Activated naive CD4-positive, alpha-beta T cell treated with anti-CD3 and anti-CD28 coated beads for 36 hours (primary cell): ENCODE measurements at regions of chr4 and their contacts with region 1.

Region 1: DNA sequence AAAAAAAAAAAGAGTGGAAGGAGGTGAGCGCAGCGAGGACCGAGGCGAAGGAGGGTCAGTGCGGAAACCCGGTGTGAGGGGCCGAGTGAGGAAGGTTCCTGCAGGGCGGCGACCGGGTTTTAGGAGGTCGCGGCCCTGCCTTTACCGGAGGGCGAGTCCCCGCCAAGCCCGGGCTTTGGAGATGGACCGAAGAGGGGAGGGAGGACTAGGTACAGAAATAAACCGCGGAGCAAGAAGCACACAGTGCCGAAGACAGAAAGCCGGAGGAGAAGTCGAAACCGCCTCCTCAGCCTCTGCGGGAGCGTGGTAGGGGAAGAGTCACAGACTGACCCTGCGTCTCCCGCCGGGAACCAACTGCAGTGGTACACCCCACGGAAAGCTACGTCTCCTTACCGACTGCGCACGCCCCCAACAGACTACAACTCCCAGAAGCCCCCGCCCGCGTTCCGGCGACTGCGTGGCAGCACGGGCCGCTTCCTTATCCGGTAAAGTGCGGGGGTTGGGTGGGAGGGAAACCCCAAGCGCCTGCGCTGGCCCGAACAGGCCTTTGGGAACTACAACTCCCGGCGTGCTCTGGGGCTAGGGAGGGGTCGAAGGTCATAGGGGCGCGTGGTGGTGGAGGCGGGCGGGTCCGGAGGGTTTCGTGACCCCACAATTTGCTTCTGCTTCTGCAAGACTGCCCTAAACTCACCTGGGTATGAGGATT is at the start of gene NFXL1:
- DNase-seq: peak; percentile 97
- H3K4me3 Mint-ChIP-seq: peak within 1 kb of the TSS; percentile 90
- H3K27ac Mint-ChIP-seq: peak within 1 kb of the TSS; percentile 91
- H3K4me1 Mint-ChIP-seq: peaks cover 29% of the 10 kb centered on the region
- H3K27me3 Mint-ChIP-seq: no peaks in the 10 kb centered on the region
- total RNA-seq, gene NFXL1: 10.4 to 11.4 TPM

Region 2: DNA sequence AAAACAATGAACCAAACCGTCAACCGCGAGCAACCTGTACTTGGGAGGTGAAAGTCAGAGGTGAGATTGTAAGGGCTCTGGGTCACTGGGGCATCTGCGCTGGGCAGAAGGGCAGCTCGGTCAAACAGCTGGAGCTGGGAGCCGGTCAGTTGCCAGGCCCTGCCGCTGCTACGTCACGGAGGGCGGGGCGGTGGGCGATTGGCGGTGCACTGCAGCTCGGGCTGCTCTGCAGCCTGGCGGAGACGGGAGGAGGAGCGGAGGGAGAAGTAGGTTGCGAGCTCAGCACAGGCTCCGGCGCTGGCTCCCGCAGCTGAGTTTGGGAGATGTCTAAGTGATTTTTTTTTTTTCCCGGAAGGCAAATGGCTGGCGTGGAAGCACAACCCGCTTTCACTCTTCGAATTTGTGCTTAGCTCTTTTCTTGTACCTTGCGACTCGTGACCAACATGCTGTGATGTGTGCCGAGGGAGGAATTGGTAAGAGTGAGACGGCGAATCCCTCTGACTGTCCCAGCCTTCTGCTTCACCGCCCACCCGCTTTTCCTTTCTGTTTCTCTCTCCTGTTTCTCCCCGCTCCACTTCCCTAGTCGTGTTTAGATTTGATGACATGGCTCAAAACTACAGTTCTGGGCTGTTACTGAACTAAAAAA is 429.2 kb before region 1 on chr4 and contains the start of gene ATP10D:
- CTCF ChIA-PET with region 1: no interaction called
- intact Hi-C with region 1: loop called (anchors 5 kb)
- DNase-seq: peak; percentile 82
- H3K4me3 Mint-ChIP-seq: peak within 1 kb of the TSS; percentile 93
- H3K27ac Mint-ChIP-seq: peak within 1 kb of the TSS; percentile 65
- H3K4me1 Mint-ChIP-seq: peaks cover 16% of the 10 kb centered on the region
- H3K27me3 Mint-ChIP-seq: no peaks in the 10 kb centered on the region
- total RNA-seq, gene ATP10D: 2.7 to 3.1 TPM

Region 3: DNA sequence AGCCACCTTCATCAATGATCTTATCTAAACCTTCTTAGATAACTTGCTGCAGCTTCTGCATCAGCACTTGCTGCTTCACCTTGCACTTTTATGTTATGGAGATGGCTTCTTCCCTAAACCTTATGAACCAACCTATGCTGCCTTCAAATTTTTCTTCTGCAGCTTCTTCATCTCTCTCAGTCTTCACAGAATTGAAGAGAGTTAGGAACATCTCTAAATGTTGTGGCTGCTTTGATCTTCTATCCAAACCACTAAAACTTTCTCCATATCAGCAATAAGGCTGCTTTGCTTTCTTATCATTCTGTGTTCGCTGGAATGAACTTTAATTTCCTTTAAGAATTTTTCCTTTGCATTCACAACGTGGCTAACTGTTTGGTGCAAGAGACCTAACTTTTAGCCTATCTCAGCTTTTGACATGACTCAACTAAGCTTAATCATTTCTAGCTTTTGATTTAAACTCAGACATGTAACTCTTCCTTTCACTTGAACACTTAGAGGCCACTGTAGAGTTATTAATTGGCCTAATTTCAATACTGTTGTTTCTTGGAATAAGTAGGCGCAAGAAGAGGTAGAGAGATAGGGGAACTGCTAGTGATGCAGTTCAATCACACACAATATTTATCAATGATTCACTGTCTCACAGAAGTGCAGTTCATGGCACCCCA is 40.4 kb before region 1 on chr4:
- CTCF ChIA-PET with region 1: no interaction called
- intact Hi-C with region 1: loop called (anchors 1 kb)
- DNase-seq: no peak
- H3K4me3 Mint-ChIP-seq: no peak overlapping the region
- H3K27ac Mint-ChIP-seq: peak overlapping the region; percentile 16
- H3K4me1 Mint-ChIP-seq: peaks cover 11% of the 10 kb centered on the region
- H3K27me3 Mint-ChIP-seq: no peaks in the 10 kb centered on the region

Region 4: DNA sequence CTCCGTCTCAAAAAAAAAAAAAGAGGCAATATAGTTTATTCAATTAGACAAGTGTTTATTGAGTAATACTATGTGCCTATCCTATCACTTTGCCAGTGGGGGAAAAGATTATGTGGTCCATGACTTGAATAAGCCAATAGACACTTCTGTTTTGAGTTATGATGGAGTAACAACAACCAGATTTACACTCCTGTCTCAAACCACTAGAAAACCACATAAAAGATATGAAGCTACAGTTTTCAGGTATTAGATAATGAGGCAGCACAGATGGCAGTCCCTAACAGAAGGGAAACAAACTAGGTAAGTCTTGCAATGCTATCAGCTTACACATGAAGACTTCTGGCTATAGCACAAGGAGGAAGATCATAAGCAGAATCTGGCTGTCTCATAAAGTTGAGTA is 22.4 kb before region 1 on chr4:
- CTCF ChIA-PET with region 1: no interaction called
- intact Hi-C with region 1: loop called (anchors 1 kb)
- DNase-seq: no peak
- H3K4me3 Mint-ChIP-seq: no peak overlapping the region
- H3K27ac Mint-ChIP-seq: no peak overlapping the region
- H3K4me1 Mint-ChIP-seq: peaks cover 13% of the 10 kb centered on the region
- H3K27me3 Mint-ChIP-seq: no peaks in the 10 kb centered on the region